ENCODE measurements at regions of chr15 and their contacts with region 1.

Region 1: DNA sequence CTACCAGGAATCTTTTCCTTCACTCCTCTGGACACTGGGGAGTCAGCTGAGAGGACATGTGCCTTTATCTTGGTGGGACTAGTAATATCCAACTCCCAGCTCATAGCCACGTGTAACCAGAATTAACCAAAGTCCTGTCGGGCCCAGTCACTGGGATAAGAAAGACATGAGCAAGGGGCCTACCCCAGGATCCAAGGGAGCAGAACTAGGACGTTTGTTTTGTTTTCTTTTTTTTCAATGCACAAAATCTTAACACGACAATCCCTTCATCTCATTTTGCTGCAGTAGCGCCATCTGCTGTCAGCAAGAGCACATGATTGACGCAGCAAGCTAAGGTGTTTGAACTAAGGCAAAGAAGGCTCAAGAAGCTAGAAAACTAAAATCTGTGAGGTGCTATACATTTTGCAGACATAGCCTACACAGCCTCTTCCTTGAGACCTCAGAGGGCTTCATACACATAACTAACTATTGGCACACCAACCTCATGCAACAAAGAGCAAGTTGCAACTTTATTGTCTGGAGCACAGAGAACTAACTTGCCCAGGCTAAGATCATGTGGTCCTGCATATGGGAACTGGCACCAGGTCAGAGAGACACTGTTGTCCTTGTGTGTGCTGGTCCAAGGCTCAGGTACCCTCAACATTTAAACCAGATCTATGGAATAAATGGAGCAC is 43.6 kb downstream of the RLBP1 start:
- DNase-seq: peak; percentile 15 to 66 (median 48)
- ATAC-seq: peak; percentile 63
- H3K4me3 ChIP-seq: no peak overlapping the region
- H3K4me3 Mint-ChIP-seq: no peak overlapping the region
- H3K27ac ChIP-seq: no peak overlapping the region
- H3K27ac Mint-ChIP-seq: peak overlapping the region in 2 of 9 donors; percentile 46 to 72
- H3K4me1 ChIP-seq: no peaks in the 10 kb centered on the region
- H3K4me1 Mint-ChIP-seq: peaks cover 5 to 17% (median 7%) of the 10 kb centered on the region in 7 donors
- H3K27me3 ChIP-seq: no peaks in the 10 kb centered on the region
- H3K27me3 Mint-ChIP-seq: no peaks in the 10 kb centered on the region

Region 2: DNA sequence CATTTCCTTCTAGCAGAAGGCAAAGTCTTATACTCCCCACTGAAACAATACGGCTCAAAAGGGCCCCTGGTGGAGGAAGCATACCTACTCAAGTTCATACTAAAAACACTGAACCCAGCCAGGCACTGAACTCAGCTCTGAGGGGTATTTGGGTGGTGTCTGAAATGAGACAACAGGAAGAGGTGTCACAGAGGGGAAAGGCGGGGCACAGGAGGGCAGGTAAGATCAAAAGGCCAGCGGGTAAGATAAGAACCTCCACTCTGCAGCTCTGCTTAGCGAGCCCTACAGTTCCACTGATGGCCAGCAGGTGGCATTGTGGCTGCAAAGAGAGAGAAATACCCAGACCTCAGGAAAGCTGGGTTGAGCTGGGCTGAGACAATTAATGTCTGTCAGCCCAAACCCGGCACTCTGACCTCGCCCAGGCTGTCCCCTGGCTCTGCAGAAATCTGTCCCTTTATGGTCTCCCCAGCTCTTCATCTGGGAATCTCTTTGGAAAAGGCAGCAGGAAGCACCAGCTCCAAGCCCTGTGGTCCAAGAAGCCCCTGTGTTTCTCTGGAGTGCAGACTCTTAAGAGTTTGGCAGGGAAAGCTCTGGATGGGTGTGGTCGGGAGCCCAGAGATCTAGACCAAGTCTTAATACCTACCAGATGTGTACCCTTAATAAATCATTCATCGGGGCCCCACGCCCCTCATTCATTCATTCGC is 273.0 kb before region 1 on chr15:
- CTCF ChIA-PET with region 1: interaction called, 8 read pairs
- POLR2A ChIA-PET with region 1: no interaction called
- intact Hi-C with region 1: loop called in 1 of 2 experiments (anchors 1 kb)
- DNase-seq: peak; percentile 79 to 99 (median 98)
- ATAC-seq: peak; percentile 99
- H3K4me3 ChIP-seq: no peak overlapping the region
- H3K4me3 Mint-ChIP-seq: peak overlapping the region; percentile 16 to 78 (median 54)
- H3K27ac ChIP-seq: peak overlapping the region; percentile 70
- H3K27ac Mint-ChIP-seq: peak overlapping the region; percentile 76 to 98 (median 94)
- H3K4me1 ChIP-seq: peaks cover 19 to 37% of the 10 kb centered on the region in 2 donors
- H3K4me1 Mint-ChIP-seq: peaks cover 23 to 65% (median 52%) of the 10 kb centered on the region in 7 donors
- H3K27me3 ChIP-seq: no peaks in the 10 kb centered on the region
- H3K27me3 Mint-ChIP-seq: no peaks in the 10 kb centered on the region

Region 3: GRCh38 chr15:89034288-89034687 is 143.5 kb before region 1 on chr15:
- CTCF ChIA-PET with region 1: interaction called, 10 read pairs
- POLR2A ChIA-PET with region 1: no interaction called
- intact Hi-C with region 1: loop called in 1 of 2 experiments (anchors 1 kb)
- DNase-seq: peak in 1 of 9 donors; percentile 17
- ATAC-seq: no peak
- H3K4me3 ChIP-seq: no peak overlapping the region
- H3K4me3 Mint-ChIP-seq: no peak overlapping the region
- H3K27ac ChIP-seq: no peak overlapping the region
- H3K27ac Mint-ChIP-seq: peak overlapping the region in 1 of 9 donors; percentile 25
- H3K4me1 ChIP-seq: no peaks in the 10 kb centered on the region
- H3K4me1 Mint-ChIP-seq: peaks cover 0 to 4% (median 0%) of the 10 kb centered on the region in 7 donors
- H3K27me3 ChIP-seq: no peaks in the 10 kb centered on the region
- H3K27me3 Mint-ChIP-seq: peaks cover 0 to 33% (median 8%) of the 10 kb centered on the region in 5 donors

Region 4: GRCh38 chr15:89129123-89129815 is 48.5 kb before region 1 on chr15:
- CTCF ChIA-PET with region 1: interaction called, 3 read pairs
- POLR2A ChIA-PET with region 1: no interaction called
- intact Hi-C with region 1: loop called in 1 of 2 experiments (anchors 5 kb)
- DNase-seq: peak; percentile 23 to 54 (median 45)
- ATAC-seq: peak; percentile 39
- H3K4me3 ChIP-seq: no peak overlapping the region
- H3K4me3 Mint-ChIP-seq: no peak overlapping the region
- H3K27ac ChIP-seq: no peak overlapping the region
- H3K27ac Mint-ChIP-seq: no peak overlapping the region
- H3K4me1 ChIP-seq: peaks cover 10 to 17% of the 10 kb centered on the region in 2 donors
- H3K4me1 Mint-ChIP-seq: peaks cover 10 to 33% (median 17%) of the 10 kb centered on the region in 7 donors
- H3K27me3 ChIP-seq: no peaks in the 10 kb centered on the region
- H3K27me3 Mint-ChIP-seq: no peaks in the 10 kb centered on the region

Region 5: DNA sequence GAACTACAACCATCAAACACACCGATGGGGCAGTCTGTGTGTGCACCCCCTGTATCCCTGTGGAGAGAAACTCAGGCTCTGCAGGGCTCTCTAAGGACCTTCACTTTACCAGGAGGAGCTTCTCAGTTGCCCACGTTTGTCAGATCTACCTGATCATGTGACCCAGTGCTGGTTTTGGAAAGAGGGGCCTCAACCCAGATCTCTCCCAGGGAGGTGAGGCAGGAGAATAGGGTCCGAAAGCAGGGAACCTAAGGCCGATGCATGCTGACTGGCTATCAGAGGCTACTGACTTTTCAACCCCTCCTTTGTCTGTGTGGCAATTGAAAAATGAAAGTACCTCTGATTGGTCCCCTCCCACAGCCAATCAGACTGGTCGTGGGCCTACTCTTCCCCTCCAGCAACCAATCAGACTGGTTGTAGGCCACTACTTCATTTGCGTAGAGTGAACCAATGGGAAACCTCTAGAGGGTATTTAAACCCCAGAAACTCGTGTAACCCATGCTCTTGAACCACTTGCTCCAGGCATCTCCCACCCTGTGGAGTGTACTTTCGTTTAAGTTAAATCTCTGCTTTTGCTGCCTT is 284.7 kb after region 1 on chr15:
- CTCF ChIA-PET with region 1: no interaction called
- POLR2A ChIA-PET with region 1: no interaction called
- intact Hi-C with region 1: no loop called
- DNase-seq: no peak
- ATAC-seq: no peak
- H3K4me3 ChIP-seq: no peak overlapping the region
- H3K4me3 Mint-ChIP-seq: no peak overlapping the region
- H3K27ac ChIP-seq: no peak overlapping the region
- H3K27ac Mint-ChIP-seq: no peak overlapping the region
- H3K4me1 ChIP-seq: no peaks in the 10 kb centered on the region
- H3K4me1 Mint-ChIP-seq: peaks cover 0 to 2% (median 0%) of the 10 kb centered on the region in 7 donors
- H3K27me3 ChIP-seq: no peaks in the 10 kb centered on the region
- H3K27me3 Mint-ChIP-seq: peaks cover 5 to 28% (median 20%) of the 10 kb centered on the region in 5 donors

Measured in naive thymus-derived CD4-positive, alpha-beta T cell (primary cell).